GM18951 (cell line): ENCODE measurements at regions of chr7 and their contacts with region 1.

Region 1: DNA sequence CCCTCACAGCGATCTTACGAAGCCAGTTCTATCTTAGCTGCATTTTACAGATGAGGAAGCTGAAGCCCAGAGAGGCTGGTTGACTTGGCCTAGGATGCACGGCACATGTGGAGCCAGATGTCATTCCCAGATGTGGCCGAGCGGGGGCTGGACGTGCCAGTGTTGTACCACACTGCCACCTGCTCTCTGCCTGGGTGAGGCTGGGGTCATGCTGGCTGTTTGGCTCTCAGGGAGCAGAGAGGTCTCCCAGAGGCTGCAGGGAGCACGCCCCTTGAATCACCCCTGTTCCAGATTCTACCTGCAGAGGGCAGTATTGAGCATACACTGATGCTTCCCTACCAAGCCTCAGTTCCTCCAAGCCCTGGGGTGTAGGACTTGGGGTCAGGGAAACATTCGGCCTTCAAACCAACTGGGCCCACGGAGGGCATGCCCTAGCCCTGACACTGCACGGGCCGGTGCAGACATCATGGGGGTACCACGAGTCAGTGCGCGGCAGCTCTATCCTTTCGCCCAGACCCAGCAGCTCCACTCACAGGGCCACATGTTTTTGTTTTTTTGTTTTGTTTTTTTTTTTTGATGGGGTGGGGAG is 3.8 kb upstream of the GTF2IRD1 start:
- POLR2A ChIP-seq: no peak

Region 2: DNA sequence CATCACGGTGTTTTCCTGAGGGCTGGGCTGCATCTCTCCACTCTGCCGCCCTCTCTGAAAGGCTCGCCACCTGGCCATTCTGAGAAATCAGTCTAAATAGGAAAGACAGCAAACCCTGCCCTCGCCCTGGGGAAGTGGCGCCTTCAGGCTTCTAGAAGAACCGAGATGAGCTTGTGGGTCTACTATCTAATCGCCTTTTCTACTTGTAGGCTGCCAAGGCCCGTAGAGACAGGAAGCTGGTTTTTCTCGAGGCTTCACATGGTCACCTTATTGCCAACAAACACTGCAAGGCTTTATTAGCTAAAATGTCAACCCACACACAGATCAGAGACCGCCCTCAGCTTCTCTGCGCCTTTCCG is 218.7 kb before region 1 on chr7:
- in situ Hi-C with region 1: no loop called
- POLR2A ChIP-seq: peak; percentile 34

Region 3: GRCh38 chr7:74575138-74575727 is 125.3 kb after region 1 on chr7:
- in situ Hi-C with region 1: loop called (anchors 10 kb)
- POLR2A ChIP-seq: no peak

Region 4: GRCh38 chr7:74709880-74710671 is 260.2 kb after region 1 on chr7:
- in situ Hi-C with region 1: loop called (anchors 25 kb)
- POLR2A ChIP-seq: no peak

Region 5: DNA sequence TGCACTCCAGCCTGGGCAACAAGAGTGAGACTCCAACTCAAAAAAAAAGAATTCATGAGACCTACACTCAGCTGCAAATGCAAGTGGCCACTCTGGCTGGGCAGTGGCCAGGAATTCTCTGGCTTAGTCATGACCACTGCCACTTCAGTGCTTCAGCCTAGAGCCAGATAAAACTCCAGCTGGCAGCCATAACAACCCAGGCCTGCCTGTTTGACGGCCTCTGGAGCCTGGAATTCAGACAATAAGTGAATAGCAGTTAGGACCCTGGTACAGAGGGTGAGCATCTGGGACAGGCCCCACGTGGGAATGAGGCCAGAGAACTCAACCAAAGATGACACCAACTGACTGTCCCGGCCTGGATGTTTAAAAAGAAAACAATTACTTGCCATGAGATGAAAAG is 604.8 kb after region 1 on chr7:
- in situ Hi-C with region 1: loop called (anchors 25 kb)
- POLR2A ChIP-seq: no peak